HEK293 (cell line): ENCODE measurements at regions of chr12 and their contacts with region 1.

Region 1: DNA sequence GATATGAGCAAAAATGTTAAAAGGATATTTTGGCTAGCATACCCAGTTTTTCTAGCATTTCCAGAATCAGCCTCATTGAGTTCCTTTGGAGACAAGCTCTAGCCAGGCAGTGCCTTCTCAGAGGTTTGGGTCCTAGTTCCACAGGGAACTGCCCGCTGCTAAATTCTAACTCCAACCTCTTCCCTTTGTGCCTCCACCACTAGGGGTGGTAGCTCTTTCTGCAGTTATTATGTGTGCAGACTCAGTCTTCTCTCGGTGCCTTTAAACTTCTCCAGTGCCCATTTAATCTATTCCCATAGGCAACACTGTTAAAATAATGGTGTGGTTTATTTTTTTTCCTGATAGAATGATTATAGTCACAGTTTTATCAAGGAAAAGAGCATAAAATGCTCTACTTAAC is 21.5 kb upstream of the SLC25A3 start:
- H3K4me3 ChIP-seq: no peak overlapping the region
- H3K27ac ChIP-seq: no peak overlapping the region
- H3K4me1 ChIP-seq: no peaks in the 10 kb centered on the region
- CTCF ChIP-seq: no peak

Region 2: GRCh38 chr12:98587084-98587483 is 15.1 kb after region 1 on chr12:
- CTCF ChIA-PET with region 1: interaction called, 14 read pairs
- POLR2A ChIA-PET with region 1: interaction called, 3 read pairs
- H3K4me3 ChIP-seq: no peak overlapping the region
- H3K27ac ChIP-seq: no peak overlapping the region
- H3K4me1 ChIP-seq: no peaks in the 10 kb centered on the region
- CTCF ChIP-seq: no peak

Region 3: GRCh38 chr12:98653866-98654493 is 82.0 kb after region 1 on chr12:
- CTCF ChIA-PET with region 1: interaction called, 69 read pairs
- POLR2A ChIA-PET with region 1: interaction called, 3 read pairs
- H3K4me3 ChIP-seq: no peak overlapping the region
- H3K27ac ChIP-seq: no peak overlapping the region
- H3K4me1 ChIP-seq: no peaks in the 10 kb centered on the region
- CTCF ChIP-seq: peak; percentile 53; the same call in 1 of the 2 replicates